ENCODE measurements at regions of chr15 and their contacts with region 1.

Region 1: GRCh38 chr15:44711356-44712107 is at the start of gene B2M:
- DNase-seq: peak; percentile 95 to 98 (median 97)
- ATAC-seq: peak; percentile 84
- H3K4me3 ChIP-seq: peak within 1 kb of the TSS; percentile 83
- H3K4me3 Mint-ChIP-seq: peak within 1 kb of the TSS; percentile 93 to 100 (median 98)
- H3K27ac ChIP-seq: peak within 1 kb of the TSS; percentile 95
- H3K27ac Mint-ChIP-seq: peak within 1 kb of the TSS; percentile 98 to 100 (median 100)
- H3K4me1 ChIP-seq: peaks cover 15 to 26% of the 10 kb centered on the region in 2 donors
- H3K4me1 Mint-ChIP-seq: peaks cover 31 to 76% (median 54%) of the 10 kb centered on the region in 7 donors
- H3K27me3 ChIP-seq: no peaks in the 10 kb centered on the region
- H3K27me3 Mint-ChIP-seq: peaks cover 0 to 17% (median 0%) of the 10 kb centered on the region in 5 donors
- total RNA-seq, gene B2M: 4,325 to 8,698 (median 6,221) TPM

Region 2: GRCh38 chr15:43510200-43511011 is 1201.1 kb before region 1 on chr15:
- CTCF ChIA-PET with region 1: no interaction called
- POLR2A ChIA-PET with region 1: no interaction called
- intact Hi-C with region 1: loop called in 1 of 2 experiments (anchors 5 kb)
- DNase-seq: peak; percentile 91 to 96 (median 94)
- ATAC-seq: peak; percentile 97
- H3K4me3 ChIP-seq: peak overlapping the region; percentile 88
- H3K4me3 Mint-ChIP-seq: peak overlapping the region; percentile 89 to 100 (median 94)
- H3K27ac ChIP-seq: peak overlapping the region; percentile 76
- H3K27ac Mint-ChIP-seq: peak overlapping the region; percentile 92 to 99 (median 97)
- H3K4me1 ChIP-seq: peaks cover 14 to 17% of the 10 kb centered on the region in 2 donors
- H3K4me1 Mint-ChIP-seq: peaks cover 14 to 51% (median 28%) of the 10 kb centered on the region in 7 donors
- H3K27me3 ChIP-seq: no peaks in the 10 kb centered on the region
- H3K27me3 Mint-ChIP-seq: peaks cover 0 to 2% (median under 1%) of the 10 kb centered on the region in 5 donors

Region 3: GRCh38 chr15:44598892-44599291 is 112.6 kb before region 1 on chr15:
- CTCF ChIA-PET with region 1: no interaction called
- POLR2A ChIA-PET with region 1: interaction called, 14 read pairs
- intact Hi-C with region 1: no loop called
- DNase-seq: no peak
- ATAC-seq: no peak
- H3K4me3 ChIP-seq: no peak overlapping the region
- H3K4me3 Mint-ChIP-seq: no peak overlapping the region
- H3K27ac ChIP-seq: peak overlapping the region; percentile 13
- H3K27ac Mint-ChIP-seq: peak overlapping the region in 8 of 9 donors; percentile 6 to 82 (median 58)
- H3K4me1 ChIP-seq: peaks cover 0 to 9% of the 10 kb centered on the region in 2 donors
- H3K4me1 Mint-ChIP-seq: peaks cover 7 to 27% (median 16%) of the 10 kb centered on the region in 7 donors
- H3K27me3 ChIP-seq: no peaks in the 10 kb centered on the region
- H3K27me3 Mint-ChIP-seq: no peaks in the 10 kb centered on the region

Region 4: DNA sequence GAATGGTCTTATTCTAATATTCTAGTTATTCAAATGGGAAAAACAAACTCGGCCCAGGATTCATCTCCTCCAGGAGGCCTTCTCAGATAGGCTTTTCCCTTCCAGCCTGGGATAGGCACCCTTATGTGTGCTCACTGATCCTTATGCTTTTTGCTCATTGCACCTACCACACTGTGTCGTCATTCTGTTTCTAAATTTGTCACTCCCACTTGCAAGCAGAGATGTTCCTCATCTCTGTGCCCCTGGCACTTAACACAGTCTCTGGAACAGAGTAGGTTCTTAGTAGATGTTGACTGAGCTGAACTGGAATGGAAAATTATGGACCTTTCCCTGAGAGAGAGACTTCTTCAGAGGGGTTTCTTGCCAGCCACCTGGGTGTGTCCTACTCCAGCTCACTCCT is 29.3 kb before region 1 on chr15:
- CTCF ChIA-PET with region 1: interaction called, 19 read pairs
- POLR2A ChIA-PET with region 1: interaction called, 3,822 read pairs
- intact Hi-C with region 1: loop called (anchors 1 kb)
- DNase-seq: no peak
- ATAC-seq: no peak
- H3K4me3 ChIP-seq: peak overlapping the region; percentile 5
- H3K4me3 Mint-ChIP-seq: peak overlapping the region; percentile 64 to 84 (median 74)
- H3K27ac ChIP-seq: peak overlapping the region; percentile 69
- H3K27ac Mint-ChIP-seq: peak overlapping the region; percentile 88 to 99 (median 94)
- H3K4me1 ChIP-seq: peaks cover 65 to 72% of the 10 kb centered on the region in 2 donors
- H3K4me1 Mint-ChIP-seq: peaks cover 56 to 98% (median 86%) of the 10 kb centered on the region in 7 donors
- H3K27me3 ChIP-seq: no peaks in the 10 kb centered on the region
- H3K27me3 Mint-ChIP-seq: no peaks in the 10 kb centered on the region

Region 5: DNA sequence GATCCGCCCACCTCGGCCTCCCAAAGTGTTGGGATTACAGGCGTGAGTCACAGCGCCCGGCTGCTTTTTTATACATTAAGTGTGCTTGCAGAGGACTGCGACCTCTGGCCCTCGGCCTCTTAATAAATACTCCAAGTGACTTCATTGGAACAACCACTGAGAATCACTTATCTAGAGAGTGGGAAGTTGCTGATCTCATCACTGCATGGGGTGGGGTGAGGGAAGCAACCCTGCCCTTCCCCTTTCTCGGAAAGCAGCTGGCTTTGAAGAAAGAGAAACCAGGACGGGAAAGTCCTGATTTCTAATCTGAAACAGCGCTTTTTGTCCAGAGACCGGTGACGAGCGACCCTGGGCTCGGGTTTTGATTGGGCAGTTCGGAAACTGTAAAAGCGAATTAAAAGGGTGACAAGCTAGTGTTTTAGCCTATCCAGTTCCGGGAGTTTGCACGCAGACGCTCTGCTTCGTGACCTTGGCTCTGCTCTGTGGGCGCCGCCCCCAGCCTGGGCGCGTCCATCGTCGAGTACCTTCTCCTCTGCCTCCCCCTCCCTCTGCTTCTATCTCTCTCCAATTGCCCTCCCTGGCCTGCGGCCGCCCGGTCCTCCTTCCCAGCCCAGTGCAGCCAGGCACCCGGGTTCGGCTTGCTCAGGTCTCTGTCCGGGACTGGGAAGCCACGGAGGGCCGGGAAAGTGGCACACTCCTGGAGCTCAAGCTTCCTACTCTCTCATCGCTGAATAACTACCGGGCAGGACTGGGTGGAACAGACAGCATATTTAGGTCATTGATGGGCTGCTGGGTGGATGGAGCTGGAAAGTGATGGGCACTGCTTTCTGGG is 17.3 kb after region 1 on chr15:
- CTCF ChIA-PET with region 1: interaction called, 171 read pairs
- POLR2A ChIA-PET with region 1: interaction called, 2,064 read pairs
- intact Hi-C with region 1: loop called (anchors 1 kb)
- DNase-seq: peak; percentile 75 to 97 (median 96)
- ATAC-seq: peak; percentile 88
- H3K4me3 ChIP-seq: peak overlapping the region; percentile 94
- H3K4me3 Mint-ChIP-seq: peak overlapping the region; percentile 87 to 100 (median 99)
- H3K27ac ChIP-seq: peak overlapping the region; percentile 99
- H3K27ac Mint-ChIP-seq: peak overlapping the region; percentile 98 to 100 (median 100)
- H3K4me1 ChIP-seq: peaks cover 52 to 56% of the 10 kb centered on the region in 2 donors
- H3K4me1 Mint-ChIP-seq: peaks cover 54 to 86% (median 77%) of the 10 kb centered on the region in 7 donors
- H3K27me3 ChIP-seq: no peaks in the 10 kb centered on the region
- H3K27me3 Mint-ChIP-seq: peaks cover 0 to 2% (median 0%) of the 10 kb centered on the region in 5 donors

Region 6: DNA sequence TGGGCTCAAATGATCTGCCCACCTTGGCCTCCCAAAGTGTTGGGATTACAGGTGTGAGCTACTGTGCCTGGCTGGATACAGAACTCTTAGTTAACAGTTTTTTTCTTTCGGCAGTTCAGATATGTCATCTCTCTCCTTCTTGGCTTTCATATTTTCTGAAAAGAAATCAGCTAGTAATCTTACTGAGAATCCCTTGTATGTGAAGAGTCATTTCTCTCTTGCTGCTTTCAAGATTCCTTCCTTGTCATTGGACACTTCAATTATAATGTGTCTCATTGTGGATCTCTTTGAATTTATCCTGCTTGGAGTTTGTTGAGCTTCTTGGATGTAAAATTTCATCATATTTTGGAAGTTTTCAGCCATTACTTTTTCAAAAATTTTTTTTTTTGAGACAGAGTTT is 41.8 kb after region 1 on chr15:
- CTCF ChIA-PET with region 1: interaction called, 7 read pairs
- POLR2A ChIA-PET with region 1: interaction called, 12 read pairs
- intact Hi-C with region 1: no loop called
- DNase-seq: no peak
- ATAC-seq: no peak
- H3K4me3 ChIP-seq: no peak overlapping the region
- H3K4me3 Mint-ChIP-seq: no peak overlapping the region
- H3K27ac ChIP-seq: no peak overlapping the region
- H3K27ac Mint-ChIP-seq: no peak overlapping the region
- H3K4me1 ChIP-seq: no peaks in the 10 kb centered on the region
- H3K4me1 Mint-ChIP-seq: peaks cover 0 to 4% (median 0%) of the 10 kb centered on the region in 7 donors
- H3K27me3 ChIP-seq: no peaks in the 10 kb centered on the region
- H3K27me3 Mint-ChIP-seq: no peaks in the 10 kb centered on the region

Region 7: GRCh38 chr15:44798826-44799225 is 87.3 kb after region 1 on chr15:
- CTCF ChIA-PET with region 1: no interaction called
- POLR2A ChIA-PET with region 1: no interaction called
- intact Hi-C with region 1: no loop called
- DNase-seq: no peak
- ATAC-seq: no peak
- H3K4me3 ChIP-seq: no peak overlapping the region
- H3K4me3 Mint-ChIP-seq: no peak overlapping the region
- H3K27ac ChIP-seq: no peak overlapping the region
- H3K27ac Mint-ChIP-seq: no peak overlapping the region
- H3K4me1 ChIP-seq: no peaks in the 10 kb centered on the region
- H3K4me1 Mint-ChIP-seq: peaks cover 0 to 6% (median 0%) of the 10 kb centered on the region in 7 donors
- H3K27me3 ChIP-seq: no peaks in the 10 kb centered on the region
- H3K27me3 Mint-ChIP-seq: peaks cover 0 to 10% (median 5%) of the 10 kb centered on the region in 5 donors

Region 8: GRCh38 chr15:45126535-45127158 is 415.1 kb after region 1 on chr15:
- CTCF ChIA-PET with region 1: no interaction called
- POLR2A ChIA-PET with region 1: no interaction called
- intact Hi-C with region 1: no loop called
- DNase-seq: peak in 7 of 9 donors; percentile 17 to 51 (median 43)
- ATAC-seq: peak; percentile 72
- H3K4me3 ChIP-seq: no peak overlapping the region
- H3K4me3 Mint-ChIP-seq: no peak overlapping the region
- H3K27ac ChIP-seq: no peak overlapping the region
- H3K27ac Mint-ChIP-seq: no peak overlapping the region
- H3K4me1 ChIP-seq: no peaks in the 10 kb centered on the region
- H3K4me1 Mint-ChIP-seq: peaks cover 0 to 13% (median 6%) of the 10 kb centered on the region in 7 donors
- H3K27me3 ChIP-seq: peaks cover 0 to 8% of the 10 kb centered on the region in 2 donors
- H3K27me3 Mint-ChIP-seq: peaks cover 59 to 70% (median 61%) of the 10 kb centered on the region in 5 donors